CD4-positive, alpha-beta T cell (primary cell): ENCODE measurements at regions of chr19 and their contacts with region 1.

Region 1: GRCh38 chr19:44207126-44207803 is 5.1 kb upstream of the ZNF227 start:
- DNase-seq: peak; percentile 51 to 91 (median 71)
- ATAC-seq: peak; percentile 81
- H3K4me3 ChIP-seq: peak overlapping the region; percentile 85
- H3K4me3 Mint-ChIP-seq: peak overlapping the region; percentile 78
- H3K27ac ChIP-seq: peak overlapping the region; percentile 64 to 76
- H3K27ac Mint-ChIP-seq: peak overlapping the region; percentile 67
- H3K4me1 ChIP-seq: peaks cover 10% of the 10 kb centered on the region
- H3K4me1 Mint-ChIP-seq: peaks cover 14% of the 10 kb centered on the region
- H3K27me3 ChIP-seq: peaks cover 0 to 7% of the 10 kb centered on the region in 2 experiments
- H3K27me3 Mint-ChIP-seq: peaks cover 10% of the 10 kb centered on the region
- CTCF ChIP-seq: no peak

Region 2: DNA sequence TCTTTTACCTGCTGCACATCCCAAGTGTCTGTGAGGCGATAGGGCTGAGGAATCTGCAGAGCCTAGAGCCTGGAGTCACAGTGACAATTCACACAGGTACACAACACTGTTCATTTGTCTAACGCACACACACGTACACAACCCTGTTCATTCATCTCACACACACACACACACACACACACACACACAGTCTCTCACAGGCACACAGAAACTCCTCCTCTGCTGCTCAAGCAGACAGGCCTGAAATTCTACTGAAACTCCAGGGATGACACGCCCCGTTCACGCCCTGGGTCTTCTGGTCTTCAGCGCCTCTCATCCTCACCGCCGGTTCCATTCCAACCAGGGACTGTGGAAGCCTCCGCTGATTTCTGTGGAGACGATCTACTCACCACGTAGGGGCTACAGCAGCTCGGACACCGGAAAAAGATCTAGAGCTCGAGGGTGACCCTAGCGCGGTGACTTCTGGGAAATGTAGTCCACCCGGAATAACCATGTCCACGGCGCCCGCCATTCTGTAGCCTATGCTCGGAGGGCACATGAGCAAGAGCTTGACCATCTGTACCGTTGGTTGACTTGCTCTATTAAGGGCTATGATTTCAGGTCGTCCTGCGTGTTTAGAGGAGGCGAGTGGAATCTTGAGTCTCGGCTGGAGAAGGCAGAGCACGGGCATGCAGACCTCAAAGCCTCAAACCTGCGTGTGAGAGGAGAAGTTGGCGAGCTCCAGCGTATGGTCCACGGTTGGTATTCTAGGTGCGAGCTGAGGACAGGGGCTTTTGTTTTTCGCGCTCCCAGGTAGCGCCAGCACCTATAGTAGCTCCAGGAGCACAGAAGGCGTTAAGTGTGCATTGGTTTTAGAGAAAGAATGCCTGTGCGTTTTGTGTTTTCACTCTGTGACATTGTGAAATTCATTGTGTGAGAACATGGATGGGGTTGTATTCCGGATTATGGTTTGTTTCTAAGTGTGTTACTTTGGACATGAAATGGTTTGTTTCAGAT is 305.6 kb before region 1 on chr19:
- CTCF ChIA-PET with region 1: no interaction called
- POLR2A ChIA-PET with region 1: interaction called, 3 read pairs
- intact Hi-C with region 1: loop called in 1 of 2 experiments (anchors 5 kb)
- DNase-seq: peak; percentile 21 to 76 (median 52)
- ATAC-seq: peak; percentile 92
- H3K4me3 ChIP-seq: peak overlapping the region; percentile 71
- H3K4me3 Mint-ChIP-seq: peak overlapping the region; percentile 91
- H3K27ac ChIP-seq: no peak overlapping the region
- H3K27ac Mint-ChIP-seq: peak overlapping the region; percentile 75
- H3K4me1 ChIP-seq: peaks cover 12% of the 10 kb centered on the region
- H3K4me1 Mint-ChIP-seq: peaks cover 25% of the 10 kb centered on the region
- H3K27me3 ChIP-seq: no peaks in the 10 kb centered on the region
- H3K27me3 Mint-ChIP-seq: no peaks in the 10 kb centered on the region
- CTCF ChIP-seq: no peak

Region 3: GRCh38 chr19:44071824-44072542 is 135.3 kb before region 1 on chr19 and contains the start of gene ZNF284:
- CTCF ChIA-PET with region 1: no interaction called
- POLR2A ChIA-PET with region 1: no interaction called
- intact Hi-C with region 1: loop called in 1 of 2 experiments (anchors 5 kb)
- DNase-seq: peak; percentile 65 to 93 (median 78)
- ATAC-seq: peak; percentile 98
- H3K4me3 ChIP-seq: peak within 1 kb of the TSS; percentile 78
- H3K4me3 Mint-ChIP-seq: peak within 1 kb of the TSS; percentile 90
- H3K27ac ChIP-seq: peak within 1 kb of the TSS; percentile 39 to 43
- H3K27ac Mint-ChIP-seq: peak within 1 kb of the TSS; percentile 79
- H3K4me1 ChIP-seq: peaks cover 18% of the 10 kb centered on the region
- H3K4me1 Mint-ChIP-seq: peaks cover 24% of the 10 kb centered on the region
- H3K27me3 ChIP-seq: no peaks in the 10 kb centered on the region
- H3K27me3 Mint-ChIP-seq: no peaks in the 10 kb centered on the region
- CTCF ChIP-seq: no peak
- total RNA-seq, gene ZNF284: 0.92 to 1.2 TPM

Region 4: DNA sequence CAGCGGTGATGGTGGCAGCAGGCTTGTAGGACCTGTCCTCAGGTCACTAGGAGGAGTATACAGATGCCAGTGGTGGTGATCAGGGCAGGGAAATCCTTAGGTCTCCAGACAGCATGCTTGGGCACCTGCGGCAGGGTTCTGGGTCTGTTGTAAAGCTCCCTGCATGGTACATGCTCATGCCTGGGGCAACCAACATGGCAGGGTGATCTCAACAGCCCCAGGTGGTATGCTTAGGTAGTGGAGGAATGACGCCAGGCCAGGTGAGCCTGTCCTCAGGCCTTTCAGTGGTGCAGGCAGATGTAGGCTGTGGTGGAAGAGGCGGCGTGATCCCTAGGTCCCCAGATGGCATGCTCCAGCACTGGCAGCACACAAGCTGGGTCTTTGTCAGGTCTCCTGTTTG is 123.4 kb before region 1 on chr19:
- CTCF ChIA-PET with region 1: no interaction called
- POLR2A ChIA-PET with region 1: no interaction called
- intact Hi-C with region 1: no loop called
- DNase-seq: no peak
- ATAC-seq: no peak
- H3K4me3 ChIP-seq: no peak overlapping the region
- H3K4me3 Mint-ChIP-seq: no peak overlapping the region
- H3K27ac ChIP-seq: no peak overlapping the region
- H3K27ac Mint-ChIP-seq: no peak overlapping the region
- H3K4me1 ChIP-seq: no peaks in the 10 kb centered on the region
- H3K4me1 Mint-ChIP-seq: no peaks in the 10 kb centered on the region
- H3K27me3 ChIP-seq: no peaks in the 10 kb centered on the region
- H3K27me3 Mint-ChIP-seq: no peaks in the 10 kb centered on the region
- CTCF ChIP-seq: no peak

Region 5: GRCh38 chr19:44113138-44113783 is 94.0 kb before region 1 on chr19 and contains the start of gene ZNF225:
- CTCF ChIA-PET with region 1: no interaction called
- POLR2A ChIA-PET with region 1: no interaction called
- intact Hi-C with region 1: loop called in 1 of 2 experiments (anchors 2 kb)
- DNase-seq: peak; percentile 55 to 94 (median 72)
- ATAC-seq: peak; percentile 89
- H3K4me3 ChIP-seq: peak within 1 kb of the TSS; percentile 75
- H3K4me3 Mint-ChIP-seq: peak within 1 kb of the TSS; percentile 95
- H3K27ac ChIP-seq: peak within 1 kb of the TSS in 1 of 2 donors; percentile 29
- H3K27ac Mint-ChIP-seq: peak within 1 kb of the TSS; percentile 57
- H3K4me1 ChIP-seq: peaks cover 17% of the 10 kb centered on the region
- H3K4me1 Mint-ChIP-seq: peaks cover 37% of the 10 kb centered on the region
- H3K27me3 ChIP-seq: no peaks in the 10 kb centered on the region
- H3K27me3 Mint-ChIP-seq: no peaks in the 10 kb centered on the region
- CTCF ChIP-seq: no peak
- total RNA-seq, gene ZNF225: 0.71 to 0.73 TPM

Region 6: GRCh38 chr19:44500148-44500956 is 293.1 kb after region 1 on chr19 and contains the start of gene ZNF180:
- CTCF ChIA-PET with region 1: no interaction called
- POLR2A ChIA-PET with region 1: interaction called, 8 read pairs
- intact Hi-C with region 1: loop called in 1 of 2 experiments (anchors 2 kb)
- DNase-seq: peak; percentile 89 to 98 (median 94)
- ATAC-seq: peak; percentile 91
- H3K4me3 ChIP-seq: peak within 1 kb of the TSS; percentile 88
- H3K4me3 Mint-ChIP-seq: peak within 1 kb of the TSS; percentile 95
- H3K27ac ChIP-seq: peak within 1 kb of the TSS; percentile 63 to 74
- H3K27ac Mint-ChIP-seq: peak within 1 kb of the TSS; percentile 79
- H3K4me1 ChIP-seq: peaks cover 26% of the 10 kb centered on the region
- H3K4me1 Mint-ChIP-seq: peaks cover 38% of the 10 kb centered on the region
- H3K27me3 ChIP-seq: peaks cover 1 to 5% of the 10 kb centered on the region in 2 experiments
- H3K27me3 Mint-ChIP-seq: peaks cover 17% of the 10 kb centered on the region
- CTCF ChIP-seq: peak; percentile 60
- total RNA-seq, gene ZNF180: 7.6 to 9.4 TPM